MCF 10A (cell line): ENCODE measurements at regions of chr1 and their contacts with region 1.

Region 1: GRCh38 chr1:160726498-160727315 is 12.3 kb upstream of the SLAMF7 start:
- DNase-seq: peak; percentile 90
- H3K4me3 Mint-ChIP-seq: no peak overlapping the region
- H3K27ac Mint-ChIP-seq: no peak overlapping the region
- H3K4me1 Mint-ChIP-seq: no peaks in the 10 kb centered on the region
- H3K27me3 Mint-ChIP-seq: no peaks in the 10 kb centered on the region
- CTCF ChIP-seq: peak; percentile 91

Region 2: DNA sequence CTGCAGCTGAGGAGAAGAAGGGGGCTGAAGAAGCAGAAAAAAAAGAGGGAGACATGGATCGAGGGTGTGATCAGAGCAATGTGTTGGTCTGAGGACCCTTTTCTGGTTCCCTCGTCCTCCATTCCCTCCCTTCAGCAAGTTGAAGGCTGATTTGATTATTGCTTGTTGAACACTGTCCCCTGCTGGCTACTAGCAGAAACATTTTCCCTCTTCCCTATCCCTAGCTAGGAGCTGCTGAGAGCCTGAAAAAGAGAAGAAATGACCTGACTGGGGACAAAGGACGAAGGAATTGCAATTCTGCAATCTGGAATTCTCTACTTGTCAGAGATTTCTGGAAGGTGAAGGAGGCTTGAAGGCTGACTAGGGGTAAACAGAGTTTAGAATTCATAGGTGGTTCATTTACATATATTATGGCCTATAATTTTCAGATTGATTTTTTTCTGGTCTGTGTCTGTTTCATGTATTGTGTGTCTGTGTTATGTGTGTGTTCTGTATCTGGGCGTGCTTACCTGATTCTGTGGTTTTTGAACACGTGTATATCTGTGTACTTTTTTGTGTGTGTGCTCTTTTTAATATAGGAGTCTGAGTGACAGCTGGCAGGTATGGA is 350.1 kb before region 1 on chr1:
- CTCF ChIA-PET with region 1: no interaction called
- POLR2A ChIA-PET with region 1: no interaction called
- intact Hi-C with region 1: no loop called
- DNase-seq: peak; percentile 81
- H3K4me3 Mint-ChIP-seq: no peak overlapping the region
- H3K27ac Mint-ChIP-seq: no peak overlapping the region
- H3K4me1 Mint-ChIP-seq: peaks cover 13% of the 10 kb centered on the region
- H3K27me3 Mint-ChIP-seq: peaks cover 19% of the 10 kb centered on the region
- CTCF ChIP-seq: peak; percentile 98

Region 3: GRCh38 chr1:160739098-160739511 is 12.4 kb after region 1 on chr1 and contains the start of gene SLAMF7:
- CTCF ChIA-PET with region 1: interaction called, 14 read pairs
- POLR2A ChIA-PET with region 1: interaction called, 14 read pairs
- intact Hi-C with region 1: no loop called
- DNase-seq: peak; percentile 60
- H3K4me3 Mint-ChIP-seq: peak within 1 kb of the TSS; percentile 60
- H3K27ac Mint-ChIP-seq: no peak within 1 kb of the TSS
- H3K4me1 Mint-ChIP-seq: peaks cover 14% of the 10 kb centered on the region
- H3K27me3 Mint-ChIP-seq: no peaks in the 10 kb centered on the region
- CTCF ChIP-seq: no peak
- total RNA-seq, gene SLAMF7: 8.6 and 26.3 TPM in 2 replicates

Region 4: GRCh38 chr1:160768295-160768657 is 41.6 kb after region 1 on chr1:
- CTCF ChIA-PET with region 1: interaction called, 64 read pairs
- POLR2A ChIA-PET with region 1: interaction called, 6 read pairs
- intact Hi-C with region 1: loop called (anchors 1 kb)
- DNase-seq: peak; percentile 60
- H3K4me3 Mint-ChIP-seq: peak overlapping the region; percentile 56
- H3K27ac Mint-ChIP-seq: peak overlapping the region; percentile 75
- H3K4me1 Mint-ChIP-seq: peaks cover 17% of the 10 kb centered on the region
- H3K27me3 Mint-ChIP-seq: no peaks in the 10 kb centered on the region
- CTCF ChIP-seq: peak; percentile 70

Region 5: GRCh38 chr1:160821628-160822027 is 94.9 kb after region 1 on chr1:
- CTCF ChIA-PET with region 1: interaction called, 134 read pairs
- POLR2A ChIA-PET with region 1: interaction called, 5 read pairs
- intact Hi-C with region 1: no loop called
- DNase-seq: no peak
- H3K4me3 Mint-ChIP-seq: no peak overlapping the region
- H3K27ac Mint-ChIP-seq: no peak overlapping the region
- H3K4me1 Mint-ChIP-seq: peaks cover 9% of the 10 kb centered on the region
- H3K27me3 Mint-ChIP-seq: no peaks in the 10 kb centered on the region
- CTCF ChIP-seq: no peak